ENCODE measurements at regions of chr5 and their contacts with region 1.

Region 1: GRCh38 chr5:156920042-156920860 is 42.8 kb downstream of the TIMD4 start:
- DNase-seq: peak; percentile 89
- H3K4me3 Mint-ChIP-seq: peak overlapping the region; percentile 55
- H3K27ac Mint-ChIP-seq: peak overlapping the region; percentile 93
- H3K4me1 Mint-ChIP-seq: peaks cover 70% of the 10 kb centered on the region
- H3K27me3 Mint-ChIP-seq: no peaks in the 10 kb centered on the region

Region 2: GRCh38 chr5:156475182-156476157 is 444.8 kb before region 1 on chr5:
- CTCF ChIA-PET with region 1: no interaction called
- intact Hi-C with region 1: loop called (anchors 10 kb)
- DNase-seq: no peak
- H3K4me3 Mint-ChIP-seq: no peak overlapping the region
- H3K27ac Mint-ChIP-seq: no peak overlapping the region
- H3K4me1 Mint-ChIP-seq: peaks cover 7% of the 10 kb centered on the region
- H3K27me3 Mint-ChIP-seq: peaks cover 12% of the 10 kb centered on the region

Region 3: DNA sequence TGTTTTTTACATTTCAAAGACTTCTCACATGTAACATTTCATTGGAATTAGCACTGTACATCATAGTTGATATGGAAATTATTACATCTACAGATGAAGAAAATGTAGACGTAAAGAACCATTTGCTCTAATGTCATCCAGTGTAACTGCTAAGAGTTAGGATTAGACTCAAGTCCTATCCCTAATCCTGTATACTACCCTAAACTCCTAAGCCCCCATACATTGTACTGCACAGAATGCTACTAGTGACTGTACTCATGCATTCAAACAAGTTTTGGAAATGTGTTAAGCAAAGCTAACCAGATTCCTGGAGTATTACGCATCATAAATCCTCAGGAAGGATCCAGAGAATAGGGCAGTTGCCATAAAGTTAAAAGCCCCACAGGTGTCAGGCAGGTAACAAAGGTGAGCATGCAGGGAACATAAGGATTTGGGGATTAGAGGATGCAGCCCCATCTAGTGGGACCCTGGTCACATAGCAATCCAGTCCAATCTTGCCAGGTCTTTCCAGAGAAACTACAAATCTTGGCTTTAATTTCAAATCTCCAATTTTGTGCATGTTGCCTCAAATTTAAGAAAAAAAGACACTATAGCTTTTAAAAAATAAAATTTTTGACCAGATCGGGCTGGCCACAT is 106.7 kb after region 1 on chr5:
- CTCF ChIA-PET with region 1: interaction called, 4 read pairs
- intact Hi-C with region 1: loop called (anchors 1 kb)
- DNase-seq: peak; percentile 34
- H3K4me3 Mint-ChIP-seq: no peak overlapping the region
- H3K27ac Mint-ChIP-seq: no peak overlapping the region
- H3K4me1 Mint-ChIP-seq: peaks cover 34% of the 10 kb centered on the region
- H3K27me3 Mint-ChIP-seq: no peaks in the 10 kb centered on the region

Region 4: GRCh38 chr5:157038568-157039187 is 118.4 kb after region 1 on chr5:
- CTCF ChIA-PET with region 1: no interaction called
- intact Hi-C with region 1: no loop called
- DNase-seq: no peak
- H3K4me3 Mint-ChIP-seq: no peak overlapping the region
- H3K27ac Mint-ChIP-seq: no peak overlapping the region
- H3K4me1 Mint-ChIP-seq: peaks cover 7% of the 10 kb centered on the region
- H3K27me3 Mint-ChIP-seq: no peaks in the 10 kb centered on the region

Region 5: GRCh38 chr5:157076558-157076957 is 156.3 kb after region 1 on chr5:
- CTCF ChIA-PET with region 1: no interaction called
- intact Hi-C with region 1: no loop called
- DNase-seq: no peak
- H3K4me3 Mint-ChIP-seq: no peak overlapping the region
- H3K27ac Mint-ChIP-seq: no peak overlapping the region
- H3K4me1 Mint-ChIP-seq: peaks cover 12% of the 10 kb centered on the region
- H3K27me3 Mint-ChIP-seq: no peaks in the 10 kb centered on the region

Region 6: DNA sequence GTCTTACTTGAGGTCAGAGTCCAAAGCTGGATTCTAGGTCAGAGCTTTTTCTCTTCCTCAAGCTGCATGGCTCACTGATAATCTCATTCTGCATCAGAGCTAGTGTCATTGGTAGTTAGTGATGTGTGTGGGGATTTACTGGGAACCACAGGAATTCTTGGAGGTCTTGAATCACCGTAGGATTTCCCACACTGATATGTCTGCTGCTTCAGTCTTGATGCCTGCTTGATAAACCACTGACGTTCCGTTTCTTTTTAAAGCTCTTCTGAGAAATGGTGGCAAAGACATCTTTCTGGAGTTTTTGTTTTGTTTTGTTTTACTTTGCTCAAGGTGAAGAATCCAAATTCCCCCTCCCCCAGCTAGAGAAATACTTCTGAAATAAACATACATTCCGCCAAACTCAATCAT is 247.0 kb after region 1 on chr5:
- CTCF ChIA-PET with region 1: no interaction called
- intact Hi-C with region 1: loop called (anchors 1 kb)
- DNase-seq: peak; percentile 61
- H3K4me3 Mint-ChIP-seq: peak overlapping the region; percentile 64
- H3K27ac Mint-ChIP-seq: peak overlapping the region; percentile 100
- H3K4me1 Mint-ChIP-seq: peaks cover 79% of the 10 kb centered on the region
- H3K27me3 Mint-ChIP-seq: no peaks in the 10 kb centered on the region

Region 7: DNA sequence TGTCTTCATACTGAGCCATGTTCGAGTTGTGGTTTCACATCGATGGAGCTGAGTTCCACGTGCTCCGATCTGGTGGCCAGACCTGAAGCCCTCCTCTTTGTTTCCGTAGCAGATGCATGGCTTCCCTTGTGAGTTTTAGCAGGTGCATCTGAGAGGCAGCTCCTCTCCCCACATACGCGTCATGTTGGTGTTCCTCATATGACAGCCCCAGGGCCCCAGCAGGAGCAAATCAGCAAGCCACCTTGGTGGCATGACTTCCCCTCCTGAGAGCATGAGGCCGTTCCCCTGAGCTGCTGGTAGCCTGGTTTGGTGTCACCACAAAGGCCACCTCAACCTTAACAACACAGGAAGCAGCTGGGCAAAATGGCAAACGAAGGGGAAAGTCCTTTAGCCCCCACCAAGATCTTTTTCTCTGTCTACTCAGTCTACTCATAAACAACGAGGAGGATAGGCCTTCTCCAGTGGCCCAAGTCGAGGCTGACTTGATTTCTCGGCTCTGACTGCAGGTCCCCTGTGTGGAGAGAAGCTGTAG is 351.6 kb after region 1 on chr5:
- CTCF ChIA-PET with region 1: no interaction called
- intact Hi-C with region 1: loop called (anchors 5 kb)
- DNase-seq: peak; percentile 96
- H3K4me3 Mint-ChIP-seq: peak overlapping the region; percentile 74
- H3K27ac Mint-ChIP-seq: peak overlapping the region; percentile 99
- H3K4me1 Mint-ChIP-seq: peaks cover 79% of the 10 kb centered on the region
- H3K27me3 Mint-ChIP-seq: no peaks in the 10 kb centered on the region

Measured in activated naive CD4-positive, alpha-beta T cell treated with anti-CD3 and anti-CD28 coated beads for 36 hours (primary cell).